ENCODE measurements at regions of chr7 and their contacts with region 1.

Region 1: GRCh38 chr7:2314209-2314955 is at the start of gene SNX8:
- DNase-seq: peak; percentile 93 to 99 (median 96)
- ATAC-seq: peak; percentile 83
- H3K4me3 ChIP-seq: peak within 1 kb of the TSS; percentile 84
- H3K4me3 Mint-ChIP-seq: peak within 1 kb of the TSS; percentile 94
- H3K27ac ChIP-seq: peak within 1 kb of the TSS; percentile 13 to 48
- H3K27ac Mint-ChIP-seq: peak within 1 kb of the TSS; percentile 45
- H3K4me1 ChIP-seq: peaks cover 18% of the 10 kb centered on the region
- H3K4me1 Mint-ChIP-seq: peaks cover 9% of the 10 kb centered on the region
- H3K27me3 ChIP-seq: no peaks in the 10 kb centered on the region
- H3K27me3 Mint-ChIP-seq: no peaks in the 10 kb centered on the region
- CTCF ChIP-seq: no peak
- total RNA-seq, gene SNX8: 4.2 to 4.5 TPM

Region 2: DNA sequence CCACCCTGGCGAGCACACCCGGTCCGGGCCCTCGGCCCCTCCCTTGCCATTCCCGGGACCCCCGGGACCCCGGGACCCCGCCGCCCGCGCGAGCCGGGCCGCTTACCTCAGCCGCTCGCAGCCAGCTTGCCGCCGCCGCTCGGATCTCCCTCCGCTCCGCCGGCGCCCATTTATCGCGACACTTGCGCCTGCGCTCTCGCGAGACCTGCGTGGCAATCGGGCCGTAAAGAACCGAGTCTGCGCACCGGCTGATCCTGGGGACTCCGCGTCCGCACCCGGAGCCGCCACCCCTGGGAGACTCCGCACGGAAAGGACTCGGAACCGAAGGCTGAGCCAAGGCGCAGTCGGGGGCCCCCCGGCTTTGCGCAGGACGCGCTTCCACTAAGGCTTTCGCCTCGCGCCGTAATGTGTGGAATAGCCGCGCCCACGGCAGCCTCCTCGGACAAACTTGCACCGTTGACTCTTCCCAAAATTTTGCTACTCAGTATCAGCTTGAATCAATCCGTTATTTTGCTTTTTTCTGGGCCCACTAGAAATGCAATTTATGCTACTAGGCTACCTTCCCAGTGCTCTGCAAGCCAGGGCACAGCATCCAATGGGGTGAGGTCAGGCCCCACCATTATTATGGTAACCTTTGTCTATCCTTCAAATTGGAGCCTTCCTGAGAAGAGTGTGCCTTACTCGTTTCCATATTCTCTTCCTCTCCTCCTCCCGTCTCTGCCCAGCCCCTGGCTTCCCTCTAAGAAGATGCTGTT is 81.4 kb before region 1 on chr7 and contains the start of gene MAD1L1:
- CTCF ChIA-PET with region 1: no interaction called
- POLR2A ChIA-PET with region 1: no interaction called
- intact Hi-C with region 1: loop called in 1 of 2 experiments (anchors 2 kb)
- DNase-seq: peak; percentile 81 to 94 (median 86)
- ATAC-seq: peak; percentile 91
- H3K4me3 ChIP-seq: peak within 1 kb of the TSS; percentile 78
- H3K4me3 Mint-ChIP-seq: peak within 1 kb of the TSS; percentile 94
- H3K27ac ChIP-seq: peak within 1 kb of the TSS in 1 of 2 donors; percentile 67
- H3K27ac Mint-ChIP-seq: peak within 1 kb of the TSS; percentile 70
- H3K4me1 ChIP-seq: peaks cover 34% of the 10 kb centered on the region
- H3K4me1 Mint-ChIP-seq: peaks cover 36% of the 10 kb centered on the region
- H3K27me3 ChIP-seq: no peaks in the 10 kb centered on the region
- H3K27me3 Mint-ChIP-seq: no peaks in the 10 kb centered on the region
- CTCF ChIP-seq: no peak
- total RNA-seq, gene MAD1L1: 157 to 160 TPM

Region 3: GRCh38 chr7:2354186-2354938 is 40.0 kb after region 1 on chr7 and contains the start of gene EIF3B:
- CTCF ChIA-PET with region 1: interaction called, 3 read pairs
- POLR2A ChIA-PET with region 1: interaction called, 5 read pairs
- intact Hi-C with region 1: loop called (anchors 1 kb)
- DNase-seq: peak; percentile 81 to 96 (median 88)
- ATAC-seq: peak; percentile 86
- H3K4me3 ChIP-seq: peak within 1 kb of the TSS; percentile 85
- H3K4me3 Mint-ChIP-seq: peak within 1 kb of the TSS; percentile 92
- H3K27ac ChIP-seq: peak within 1 kb of the TSS; percentile 99 to 100
- H3K27ac Mint-ChIP-seq: peak within 1 kb of the TSS; percentile 100
- H3K4me1 ChIP-seq: peaks cover 53% of the 10 kb centered on the region
- H3K4me1 Mint-ChIP-seq: peaks cover 37% of the 10 kb centered on the region
- H3K27me3 ChIP-seq: no peaks in the 10 kb centered on the region
- H3K27me3 Mint-ChIP-seq: no peaks in the 10 kb centered on the region
- CTCF ChIP-seq: no peak
- total RNA-seq, gene EIF3B: 166 to 167 TPM

Region 4: DNA sequence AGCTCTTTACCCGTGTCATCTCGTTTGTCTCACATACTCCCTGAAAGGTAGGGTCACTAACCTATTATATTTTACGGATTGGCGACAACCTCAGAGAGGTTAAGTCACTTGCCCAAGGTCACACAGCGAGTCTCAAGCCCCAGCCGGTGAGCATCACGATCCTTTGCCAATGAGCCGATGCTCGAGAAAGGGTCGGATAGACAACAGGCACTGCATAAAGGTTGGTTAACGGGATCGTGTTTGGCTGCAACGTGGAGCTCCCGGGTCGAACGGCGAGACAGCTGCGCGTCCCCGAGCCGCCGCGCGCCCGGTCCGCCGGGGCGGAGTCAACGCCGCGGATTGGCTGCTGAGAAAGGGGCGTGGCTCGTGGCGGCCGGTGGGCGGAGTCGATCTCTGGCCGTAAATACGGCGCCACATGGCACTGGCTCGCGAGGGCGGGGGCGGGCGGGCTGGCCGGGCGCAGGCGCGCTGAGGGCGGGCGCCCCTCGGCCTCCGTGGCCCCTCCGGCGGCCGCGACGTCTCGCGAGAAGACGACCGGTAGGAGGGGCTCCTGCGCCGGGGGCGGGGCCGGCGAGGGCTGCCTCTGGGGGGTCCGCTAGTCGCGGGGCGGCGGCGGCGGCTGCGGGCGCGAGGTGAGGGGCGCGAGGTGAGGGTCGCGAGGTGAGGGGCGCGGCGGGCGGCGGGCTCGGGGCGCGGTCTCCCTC is 88.8 kb after region 1 on chr7 and contains the start of gene CHST12:
- CTCF ChIA-PET with region 1: no interaction called
- POLR2A ChIA-PET with region 1: no interaction called
- intact Hi-C with region 1: loop called (anchors 1 to 2 kb)
- DNase-seq: peak; percentile 90 to 99 (median 93)
- ATAC-seq: peak; percentile 76
- H3K4me3 ChIP-seq: peak within 1 kb of the TSS; percentile 76
- H3K4me3 Mint-ChIP-seq: peak within 1 kb of the TSS; percentile 88
- H3K27ac ChIP-seq: peak within 1 kb of the TSS; percentile 35 to 38
- H3K27ac Mint-ChIP-seq: peak within 1 kb of the TSS; percentile 82
- H3K4me1 ChIP-seq: peaks cover 57% of the 10 kb centered on the region
- H3K4me1 Mint-ChIP-seq: peaks cover 54% of the 10 kb centered on the region
- H3K27me3 ChIP-seq: no peaks in the 10 kb centered on the region
- H3K27me3 Mint-ChIP-seq: no peaks in the 10 kb centered on the region
- CTCF ChIP-seq: no peak
- total RNA-seq, gene CHST12: 6.6 to 8.6 TPM

Region 5: DNA sequence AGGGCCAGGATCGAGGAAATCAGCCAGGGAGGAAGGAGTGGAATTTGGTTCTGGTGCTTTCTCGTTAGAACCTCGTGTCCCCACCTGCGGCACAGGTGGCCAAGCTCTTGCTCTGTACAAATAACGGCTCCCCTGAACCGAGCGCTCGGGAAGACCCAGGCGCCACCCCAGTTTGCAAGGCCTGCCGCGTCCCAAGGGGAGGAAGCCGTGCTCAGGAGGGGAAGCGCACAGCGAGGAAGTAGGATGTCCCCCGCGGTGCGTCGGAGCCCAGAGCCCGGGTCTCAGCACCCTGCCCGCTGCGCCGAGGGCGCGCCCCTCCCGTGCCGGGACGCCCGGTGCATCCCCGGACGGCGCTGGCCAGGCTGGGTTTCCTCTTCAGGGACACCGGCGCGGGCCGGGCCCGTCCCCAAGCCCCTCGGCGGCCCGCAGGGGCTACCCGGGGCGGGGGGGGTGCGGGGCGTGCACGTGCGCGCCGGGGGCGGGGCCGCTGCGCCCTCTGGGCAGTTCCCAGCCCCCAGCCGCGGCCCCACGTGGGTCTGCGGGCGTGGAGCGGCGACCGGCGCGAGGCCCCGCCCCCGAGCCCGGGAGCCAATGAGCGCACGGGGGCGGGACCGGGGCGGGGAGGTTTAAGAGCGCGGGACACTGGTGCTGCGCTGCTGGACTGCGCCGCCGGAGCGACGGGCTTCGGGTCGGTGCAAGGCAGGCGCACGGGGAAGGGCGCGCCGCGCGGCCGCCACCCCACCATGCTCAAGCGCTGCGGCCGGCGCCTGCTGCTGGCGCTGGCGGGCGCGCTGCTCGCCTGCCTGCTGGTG is 204.9 kb after region 1 on chr7 and contains the start of gene LFNG:
- CTCF ChIA-PET with region 1: no interaction called
- POLR2A ChIA-PET with region 1: no interaction called
- intact Hi-C with region 1: loop called in 1 of 2 experiments (anchors 5 kb)
- DNase-seq: peak; percentile 63 to 94 (median 84)
- ATAC-seq: peak; percentile 63
- H3K4me3 ChIP-seq: peak within 1 kb of the TSS; percentile 99
- H3K4me3 Mint-ChIP-seq: peak within 1 kb of the TSS; percentile 95
- H3K27ac ChIP-seq: peak within 1 kb of the TSS; percentile 36 to 88
- H3K27ac Mint-ChIP-seq: peak within 1 kb of the TSS; percentile 84
- H3K4me1 ChIP-seq: peaks cover 51% of the 10 kb centered on the region
- H3K4me1 Mint-ChIP-seq: peaks cover 37% of the 10 kb centered on the region
- H3K27me3 ChIP-seq: no peaks in the 10 kb centered on the region
- H3K27me3 Mint-ChIP-seq: no peaks in the 10 kb centered on the region
- CTCF ChIP-seq: no peak
- total RNA-seq, gene LFNG: 96.7 to 99.8 TPM

Region 6: DNA sequence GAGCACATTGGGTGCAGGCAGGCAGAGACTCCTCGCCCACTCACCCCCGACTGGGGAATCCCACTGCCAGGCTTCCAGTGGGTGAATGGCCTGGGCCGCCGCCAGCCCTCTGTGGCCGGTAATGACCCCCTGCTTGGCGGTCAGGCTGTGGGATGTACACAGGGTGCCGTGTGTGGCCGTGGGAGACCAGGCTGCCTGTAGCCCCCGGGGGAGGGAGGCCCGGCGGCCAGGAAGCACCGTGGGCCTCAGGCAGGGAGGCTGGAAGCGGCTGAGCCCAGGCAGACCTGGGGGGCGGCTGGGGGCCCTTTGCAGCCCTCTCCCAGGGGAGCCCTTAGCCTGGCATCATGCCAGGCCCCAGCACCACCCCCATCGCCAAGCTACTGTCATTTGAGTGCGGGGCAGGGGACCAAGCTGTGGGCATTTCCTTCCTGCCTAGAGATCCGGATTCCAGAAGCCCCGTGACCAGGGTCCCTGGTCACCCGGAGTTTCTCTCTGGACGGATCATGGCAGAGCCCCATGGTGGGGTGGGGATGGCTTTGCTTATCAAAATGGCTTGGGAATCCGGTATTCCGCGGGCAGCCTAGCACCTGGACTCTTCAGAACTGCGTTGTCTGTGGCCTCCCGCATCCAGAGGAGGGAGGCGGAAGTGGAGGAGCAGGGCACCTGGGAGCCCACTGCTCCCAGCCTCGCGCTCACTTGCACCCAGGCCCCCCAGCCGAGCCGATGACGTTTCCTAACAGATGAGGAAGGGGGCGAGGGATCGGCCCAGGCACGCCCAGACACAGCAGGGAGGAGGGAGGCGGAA is 318.6 kb after region 1 on chr7:
- CTCF ChIA-PET with region 1: no interaction called
- POLR2A ChIA-PET with region 1: no interaction called
- intact Hi-C with region 1: loop called in 1 of 2 experiments (anchors 2 kb)
- DNase-seq: peak in 8 of 14 experiments; percentile 18 to 65 (median 46)
- ATAC-seq: peak; percentile 9
- H3K4me3 ChIP-seq: peak overlapping the region; percentile 85
- H3K4me3 Mint-ChIP-seq: peak overlapping the region; percentile 92
- H3K27ac ChIP-seq: no peak overlapping the region
- H3K27ac Mint-ChIP-seq: peak overlapping the region; percentile 66
- H3K4me1 ChIP-seq: peaks cover 34% of the 10 kb centered on the region
- H3K4me1 Mint-ChIP-seq: peaks cover 20% of the 10 kb centered on the region
- H3K27me3 ChIP-seq: no peaks in the 10 kb centered on the region
- H3K27me3 Mint-ChIP-seq: no peaks in the 10 kb centered on the region
- CTCF ChIP-seq: no peak

Measured in CD4-positive, alpha-beta T cell (primary cell).